Motor neuron (in vitro differentiated cells): ENCODE measurements at regions of chr9 and their contacts with region 1.

Region 1: GRCh38 chr9:127418037-127418471 is 6.1 kb upstream of the ZNF79 start:
- ATAC-seq: peak in 7 of 8 experiments; percentile 21 to 64 (median 54)
- H3K4me3 ChIP-seq: no peak overlapping the region
- H3K27ac ChIP-seq: no peak overlapping the region
- H3K4me1 ChIP-seq: peaks cover 15 to 22% of the 10 kb centered on the region in 2 donors

Region 2: GRCh38 chr9:127214421-127215267 is 203.4 kb before region 1 on chr9:
- in situ Hi-C with region 1: loop called in 1 of 9 experiments (anchors 10 kb)
- ATAC-seq: peak; percentile 25 to 86 (median 64)
- H3K4me3 ChIP-seq: no peak overlapping the region
- H3K27ac ChIP-seq: no peak overlapping the region
- H3K4me1 ChIP-seq: no peaks in the 10 kb centered on the region

Region 3: DNA sequence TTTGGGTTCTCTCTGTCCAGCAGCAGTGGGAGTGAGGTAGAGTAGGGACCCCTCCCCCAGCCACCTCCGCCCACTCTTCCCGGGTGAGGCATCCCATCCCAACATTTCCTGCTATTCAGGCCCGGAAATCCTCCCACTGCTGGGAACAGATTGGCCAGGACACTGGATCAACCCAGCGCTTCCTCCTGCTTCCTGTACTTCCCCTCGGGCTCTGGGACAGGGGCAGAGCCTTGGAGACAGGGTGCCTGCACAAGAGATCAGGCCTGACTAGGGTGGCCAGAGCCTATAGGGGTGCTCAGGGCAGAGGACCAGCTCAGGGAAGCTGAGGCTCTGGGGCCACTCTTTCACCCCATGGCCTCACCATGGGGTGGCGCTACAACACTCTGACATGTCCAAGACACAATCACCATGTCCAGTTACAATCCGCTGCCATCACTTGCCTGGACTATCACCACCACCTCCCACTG is 345.9 kb after region 1 on chr9:
- in situ Hi-C with region 1: no loop called
- ATAC-seq: peak in 5 of 8 experiments; percentile 2 to 68 (median 43)
- H3K4me3 ChIP-seq: no peak overlapping the region
- H3K27ac ChIP-seq: no peak overlapping the region
- H3K4me1 ChIP-seq: peaks cover 0 to 12% of the 10 kb centered on the region in 2 donors